Right cardiac atrium (tissue), 5 donors: ENCODE measurements at regions of chr10 and their contacts with region 1.

Region 1: DNA sequence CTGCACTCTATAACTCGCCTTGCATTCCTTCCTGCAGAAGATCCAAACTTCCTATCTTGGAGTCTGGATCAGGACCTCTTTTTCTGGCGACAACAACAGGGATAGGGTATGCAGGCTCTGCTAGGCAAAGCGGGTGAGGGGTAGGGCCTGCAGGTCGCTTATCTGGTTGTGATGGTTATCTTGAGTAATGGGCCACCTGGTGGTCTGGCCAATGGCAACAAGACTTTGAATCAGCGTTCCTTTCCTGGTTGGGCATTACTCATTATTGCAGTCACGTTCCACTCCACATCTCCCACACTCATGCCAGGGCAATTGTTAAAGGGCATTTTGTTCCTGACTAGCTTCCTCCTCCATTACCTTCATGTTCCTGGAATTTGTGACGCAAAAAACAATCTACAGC is 48.4 kb upstream of the PLXDC2 start:
- DNase-seq: no peak
- ATAC-seq: no peak
- H3K4me3 ChIP-seq: no peak overlapping the region
- H3K27ac ChIP-seq: no peak overlapping the region
- H3K4me1 ChIP-seq: no peaks in the 10 kb centered on the region
- H3K27me3 ChIP-seq: no peaks in the 10 kb centered on the region

Region 2: DNA sequence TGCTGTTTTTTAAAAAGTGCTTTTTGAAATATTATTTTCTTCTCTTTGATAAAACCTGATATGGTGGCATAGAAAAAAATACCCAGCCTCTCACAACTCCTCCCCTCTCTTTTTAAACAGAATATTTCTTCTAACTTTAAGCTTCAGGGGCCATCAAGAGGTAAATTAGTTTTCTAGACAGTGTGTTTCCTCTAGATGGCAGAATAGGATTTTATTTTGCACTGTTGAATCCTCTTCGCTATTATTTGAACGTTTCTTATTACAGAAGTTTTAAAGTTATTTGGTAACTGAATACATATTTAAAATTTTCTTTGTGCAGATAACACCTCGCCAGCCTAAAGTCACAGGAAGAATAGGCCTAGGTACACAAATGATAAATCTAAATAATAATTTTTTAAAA is 1078.4 kb before region 1 on chr10:
- intact Hi-C with region 1: loop called in 1 of 4 experiments (anchors 10 kb)
- DNase-seq: no peak
- ATAC-seq: no peak
- H3K4me3 ChIP-seq: no peak overlapping the region
- H3K27ac ChIP-seq: no peak overlapping the region
- H3K4me1 ChIP-seq: no peaks in the 10 kb centered on the region
- H3K27me3 ChIP-seq: no peaks in the 10 kb centered on the region

Region 3: DNA sequence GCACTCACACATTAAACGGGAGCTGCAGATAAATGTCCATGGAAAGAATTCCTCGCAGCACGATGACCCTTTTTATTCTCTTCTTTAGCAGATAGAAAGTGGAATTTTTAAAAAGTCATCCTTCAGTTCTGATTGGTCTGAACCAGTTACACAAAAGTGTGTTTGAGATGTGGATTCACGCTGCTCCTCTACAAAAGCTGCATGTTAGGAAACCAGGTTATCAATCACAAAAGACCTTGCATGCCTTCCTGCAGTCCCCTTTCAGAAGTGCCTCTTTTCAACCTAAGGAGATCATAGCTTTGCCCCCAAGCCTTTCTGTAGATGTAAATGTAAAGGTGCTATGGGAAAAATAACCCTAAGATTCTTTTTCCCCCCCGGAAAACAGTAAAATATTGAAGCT is 348.0 kb after region 1 on chr10:
- intact Hi-C with region 1: no loop called
- DNase-seq: no peak
- ATAC-seq: no peak
- H3K4me3 ChIP-seq: no peak overlapping the region
- H3K27ac ChIP-seq: no peak overlapping the region
- H3K4me1 ChIP-seq: no peaks in the 10 kb centered on the region
- H3K27me3 ChIP-seq: no peaks in the 10 kb centered on the region